T-cell (primary cell): ENCODE measurements at regions of chr6 and their contacts with region 1.

Region 1: GRCh38 chr6:83859410-83860358 is at the start of gene CYB5R4:
- DNase-seq: peak; percentile 82 to 96 (median 91)
- ATAC-seq: peak; percentile 96 to 97 (median 96)
- H3K4me3 ChIP-seq: peak within 1 kb of the TSS; percentile 79 to 85
- H3K4me3 Mint-ChIP-seq: peak within 1 kb of the TSS; percentile 91 to 99 (median 96)
- H3K27ac ChIP-seq: peak within 1 kb of the TSS; percentile 80
- H3K27ac Mint-ChIP-seq: peak within 1 kb of the TSS; percentile 85 to 86
- H3K4me1 ChIP-seq: peaks cover 12 to 13% of the 10 kb centered on the region in 2 experiments
- H3K4me1 Mint-ChIP-seq: peaks cover 40 to 44% (median 40%) of the 10 kb centered on the region in 3 donors
- H3K27me3 ChIP-seq: peaks cover 0 to 10% of the 10 kb centered on the region in 2 experiments
- H3K27me3 Mint-ChIP-seq: peaks cover 11% of the 10 kb centered on the region in 2 donors
- total RNA-seq, gene CYB5R4: 18.6 to 22.3 (median 20.2) TPM

Region 2: GRCh38 chr6:84227434-84228197 is 367.9 kb after region 1 on chr6 and contains the start of gene CEP162:
- CTCF ChIA-PET with region 1: interaction called in 1 of 2 experiments, 14 read pairs
- POLR2A ChIA-PET with region 1: no interaction called
- DNase-seq: peak; percentile 75 to 96 (median 87)
- ATAC-seq: peak; percentile 92 to 94 (median 92)
- H3K4me3 ChIP-seq: peak within 1 kb of the TSS; percentile 83 to 100
- H3K4me3 Mint-ChIP-seq: peak within 1 kb of the TSS; percentile 89 to 96 (median 96)
- H3K27ac ChIP-seq: peak within 1 kb of the TSS; percentile 54
- H3K27ac Mint-ChIP-seq: peak within 1 kb of the TSS; percentile 94 to 97
- H3K4me1 ChIP-seq: peaks cover 5 to 6% of the 10 kb centered on the region in 2 experiments
- H3K4me1 Mint-ChIP-seq: peaks cover 21 to 36% (median 22%) of the 10 kb centered on the region in 3 donors
- H3K27me3 ChIP-seq: peaks cover 0 to 2% of the 10 kb centered on the region in 2 experiments
- H3K27me3 Mint-ChIP-seq: peaks cover 6% of the 10 kb centered on the region in 2 donors
- total RNA-seq, gene CEP162: 7.4 to 9.8 (median 7.6) TPM